Common myeloid progenitor, CD34-positive (primary cell): ENCODE measurements at regions of chr17 and their contacts with region 1.

Region 1: GRCh38 chr17:79036596-79036995 is 12.6 kb downstream of the C1QTNF1 start:
- DNase-seq: no peak
- H3K4me3 ChIP-seq: no peak overlapping the region
- H3K27ac ChIP-seq: no peak overlapping the region
- H3K4me1 ChIP-seq: no peaks in the 10 kb centered on the region
- H3K27me3 ChIP-seq: peaks cover 0 to 14% (median 0%) of the 10 kb centered on the region in 5 experiments

Region 2: DNA sequence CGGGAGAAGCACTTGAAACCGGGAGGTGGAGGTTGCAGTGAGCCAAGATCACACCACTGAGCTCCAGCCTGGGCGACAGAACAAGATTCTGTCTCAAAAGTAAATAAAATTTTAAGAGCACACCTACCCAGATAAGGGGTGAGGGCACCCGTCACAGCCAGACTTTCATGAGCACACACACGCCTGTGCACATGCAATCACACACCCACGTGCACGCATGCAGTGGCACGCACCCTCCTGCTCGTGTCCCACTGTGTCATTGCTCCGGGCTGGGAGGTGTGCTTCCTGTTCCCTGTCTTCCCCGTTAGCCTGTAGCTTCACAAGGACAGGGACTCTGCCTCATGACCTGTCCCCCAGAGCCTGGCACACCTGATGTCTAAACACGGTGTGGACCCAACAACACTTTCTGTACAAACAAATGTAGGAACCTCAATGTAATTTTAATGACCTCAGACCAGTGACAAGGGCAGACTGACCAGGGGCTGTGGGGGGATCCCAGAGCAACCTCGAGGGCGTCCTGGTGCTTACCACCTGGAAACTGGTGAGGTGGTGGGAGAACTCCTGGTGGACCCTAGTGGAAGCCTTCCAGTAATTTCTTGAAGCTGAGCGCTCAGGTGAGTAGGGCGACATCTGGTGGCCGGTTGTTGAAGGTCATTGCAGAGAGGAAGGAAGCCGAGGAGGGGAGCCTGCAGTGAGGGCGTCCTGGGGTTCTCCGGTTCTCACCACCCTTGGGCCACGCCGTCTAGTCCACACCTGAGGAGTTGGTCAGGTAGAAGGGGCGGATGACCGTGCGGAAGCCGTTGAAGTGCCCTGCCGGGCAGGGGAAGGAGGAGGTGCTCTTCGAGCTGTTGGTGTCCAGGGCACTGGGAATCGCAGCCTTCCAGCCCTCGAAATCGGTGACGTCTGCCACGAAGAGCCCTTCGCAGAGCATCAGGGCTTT is 65.5 kb before region 1 on chr17:
- CTCF ChIA-PET with region 1: no interaction called
- POLR2A ChIA-PET with region 1: no interaction called
- DNase-seq: peak; percentile 79 to 88 (median 83)
- H3K4me3 ChIP-seq: no peak overlapping the region
- H3K27ac ChIP-seq: no peak overlapping the region
- H3K4me1 ChIP-seq: peaks cover 0 to 9% (median 5%) of the 10 kb centered on the region in 4 experiments
- H3K27me3 ChIP-seq: no peaks in the 10 kb centered on the region

Region 3: DNA sequence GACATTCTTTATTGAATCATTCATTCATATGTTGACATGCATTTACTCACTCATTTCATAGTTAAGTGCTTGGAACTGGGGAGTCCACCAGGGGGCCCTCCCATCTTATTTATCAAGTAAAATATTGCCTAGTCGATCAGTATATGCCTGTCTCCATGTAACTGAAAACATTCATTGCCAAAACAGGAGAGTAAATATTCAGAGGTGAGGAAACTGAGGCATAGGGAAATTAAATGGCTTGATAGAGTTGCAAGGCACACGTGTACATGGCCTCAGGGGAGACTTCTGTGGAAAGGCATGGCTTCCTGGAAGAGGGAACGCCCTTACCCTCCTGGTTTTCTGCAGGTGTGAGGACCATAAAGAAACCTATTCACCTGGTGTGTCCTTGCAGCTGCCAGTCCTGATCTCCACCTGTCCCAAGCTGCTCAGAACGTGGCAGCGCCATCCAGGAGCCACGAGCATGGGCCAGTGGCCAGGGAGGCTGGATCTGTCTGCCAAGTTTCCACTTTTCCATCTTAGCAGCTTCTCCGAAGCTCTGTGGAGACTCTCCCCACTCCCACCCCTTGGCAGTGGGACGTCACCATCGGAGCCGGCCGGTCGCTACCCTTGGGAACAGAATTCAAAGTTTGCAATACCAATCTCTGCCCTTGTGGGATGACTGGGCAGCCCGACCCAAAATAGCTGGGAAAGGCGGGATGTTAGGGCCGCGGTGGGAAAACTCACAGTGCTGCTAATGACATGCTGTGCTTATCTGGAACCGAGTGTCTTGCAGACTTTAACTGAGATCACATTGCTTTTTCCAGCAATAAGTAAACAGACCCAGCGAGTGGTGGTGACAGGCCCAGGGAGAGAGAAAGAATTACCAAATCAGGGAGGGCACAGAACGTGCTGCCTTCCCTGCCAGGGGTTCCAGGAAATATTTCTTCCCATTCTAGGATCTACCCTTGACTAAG is 16.7 kb before region 1 on chr17:
- CTCF ChIA-PET with region 1: interaction called, 22 read pairs
- POLR2A ChIA-PET with region 1: interaction called, 8 read pairs
- DNase-seq: peak; percentile 69 to 78 (median 76)
- H3K4me3 ChIP-seq: no peak overlapping the region
- H3K27ac ChIP-seq: no peak overlapping the region
- H3K4me1 ChIP-seq: peaks cover 0 to 15% (median 12%) of the 10 kb centered on the region in 4 experiments
- H3K27me3 ChIP-seq: peaks cover 0 to 27% (median 23%) of the 10 kb centered on the region in 5 experiments

Region 4: GRCh38 chr17:79220713-79221291 is 184.2 kb after region 1 on chr17:
- CTCF ChIA-PET with region 1: no interaction called
- POLR2A ChIA-PET with region 1: no interaction called
- DNase-seq: peak in 2 of 3 donors; percentile 1 to 4
- H3K4me3 ChIP-seq: peak overlapping the region in 3 of 7 experiments; percentile 2 to 45 (median 11)
- H3K27ac ChIP-seq: no peak overlapping the region
- H3K4me1 ChIP-seq: peaks cover 0 to 11% (median 4%) of the 10 kb centered on the region in 4 experiments
- H3K27me3 ChIP-seq: peaks cover 0 to 89% (median 29%) of the 10 kb centered on the region in 5 experiments